ENCODE measurements at regions of chr2 and their contacts with region 1.

Region 1: DNA sequence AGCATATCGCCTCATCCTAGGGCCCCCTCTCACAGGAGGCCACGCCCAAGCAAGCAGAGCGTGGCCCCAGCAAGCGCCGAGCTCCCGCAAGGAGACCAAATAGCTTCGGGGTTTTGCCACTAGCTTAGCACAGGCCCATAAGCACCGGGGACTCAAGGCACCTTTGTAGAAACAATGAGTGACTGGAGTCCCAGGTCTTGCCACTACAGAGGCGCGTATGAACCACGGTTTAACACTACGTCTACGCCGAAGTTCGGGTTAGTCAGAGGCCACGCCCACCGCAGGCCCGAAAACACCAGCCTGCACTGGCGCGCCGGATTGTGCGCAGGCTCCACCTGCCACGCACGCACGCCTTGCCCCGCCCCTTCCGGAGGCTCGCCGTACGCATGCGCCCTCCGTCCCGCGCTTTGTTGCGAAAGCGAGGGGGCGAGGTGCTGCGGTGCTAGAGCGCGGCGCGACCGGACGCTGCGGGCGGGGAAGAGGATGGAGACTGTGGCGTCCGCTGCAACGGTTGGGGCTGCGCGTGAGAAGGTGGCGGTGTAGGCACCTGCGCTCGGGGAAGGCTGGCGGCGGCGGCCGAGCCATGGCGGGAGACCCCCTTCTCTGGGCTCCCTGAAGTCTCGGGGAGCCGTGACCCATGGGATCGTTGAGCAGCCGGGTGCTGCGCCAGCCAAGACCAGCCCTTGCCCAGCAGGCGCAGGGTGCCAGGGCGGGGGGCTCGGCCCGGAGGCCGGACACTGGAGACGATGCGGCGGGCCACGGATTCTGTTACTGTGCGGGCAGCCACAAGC is at the start of gene GMCL1:
- DNase-seq: peak; percentile 99
- H3K4me3 Mint-ChIP-seq: peak within 1 kb of the TSS; percentile 94
- H3K27ac Mint-ChIP-seq: peak within 1 kb of the TSS; percentile 88
- H3K4me1 Mint-ChIP-seq: peaks cover 51% of the 10 kb centered on the region
- H3K27me3 Mint-ChIP-seq: no peaks in the 10 kb centered on the region
- total RNA-seq, gene GMCL1: 15.9 to 19.4 TPM

Region 2: DNA sequence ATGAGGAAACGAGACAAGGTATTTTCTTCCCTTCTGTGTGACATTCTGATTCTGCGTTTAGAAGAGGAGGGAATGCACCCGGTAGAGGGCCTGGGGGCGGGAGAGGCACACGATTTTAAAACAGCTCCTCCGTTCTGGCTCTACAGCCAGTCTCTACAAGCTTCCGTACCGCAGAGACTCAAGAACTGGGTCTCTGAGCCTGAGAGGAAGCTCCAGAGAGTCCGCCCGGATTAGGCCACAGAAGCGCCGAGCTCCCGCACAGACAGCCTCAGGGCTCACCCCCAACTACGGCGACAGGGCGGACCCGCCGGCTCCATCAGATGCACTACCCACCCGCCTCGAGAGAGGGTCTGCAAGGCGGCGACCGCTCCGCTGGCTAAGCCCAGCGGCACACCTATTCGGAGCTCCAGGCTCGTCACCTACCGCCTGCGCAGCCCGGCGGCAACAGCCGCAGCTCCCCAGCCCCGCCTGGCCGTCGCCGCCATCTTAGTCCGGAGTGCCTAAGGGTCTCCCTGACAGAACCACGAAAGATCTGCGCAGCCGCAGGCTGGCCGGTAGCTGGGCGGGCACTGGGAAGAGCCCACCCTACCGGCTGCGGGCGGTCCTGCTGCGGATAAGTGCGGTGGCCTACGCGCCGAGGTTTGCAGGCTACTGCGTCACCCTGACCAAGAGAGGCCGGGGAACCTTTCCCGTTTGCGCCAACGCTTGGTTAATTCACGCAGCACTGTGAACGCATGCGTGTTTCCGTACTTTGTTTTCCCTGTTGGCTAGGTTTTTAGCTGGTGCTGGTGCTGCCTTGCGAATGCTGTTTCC is 392.3 kb before region 1 on chr2 and contains the start of gene NFU1:
- CTCF ChIA-PET with region 1: no interaction called
- intact Hi-C with region 1: loop called (anchors 2 kb)
- DNase-seq: peak; percentile 90
- H3K4me3 Mint-ChIP-seq: peak within 1 kb of the TSS; percentile 95
- H3K27ac Mint-ChIP-seq: peak within 1 kb of the TSS; percentile 94
- H3K4me1 Mint-ChIP-seq: peaks cover 29% of the 10 kb centered on the region
- H3K27me3 Mint-ChIP-seq: no peaks in the 10 kb centered on the region
- total RNA-seq, gene NFU1: 35.7 to 39.3 TPM

Region 3: GRCh38 chr2:69601179-69601612 is 228.3 kb before region 1 on chr2:
- CTCF ChIA-PET with region 1: no interaction called
- intact Hi-C with region 1: no loop called
- DNase-seq: peak; percentile 24
- H3K4me3 Mint-ChIP-seq: no peak overlapping the region
- H3K27ac Mint-ChIP-seq: peak overlapping the region; percentile 79
- H3K4me1 Mint-ChIP-seq: peaks cover 92% of the 10 kb centered on the region
- H3K27me3 Mint-ChIP-seq: no peaks in the 10 kb centered on the region

Region 4: DNA sequence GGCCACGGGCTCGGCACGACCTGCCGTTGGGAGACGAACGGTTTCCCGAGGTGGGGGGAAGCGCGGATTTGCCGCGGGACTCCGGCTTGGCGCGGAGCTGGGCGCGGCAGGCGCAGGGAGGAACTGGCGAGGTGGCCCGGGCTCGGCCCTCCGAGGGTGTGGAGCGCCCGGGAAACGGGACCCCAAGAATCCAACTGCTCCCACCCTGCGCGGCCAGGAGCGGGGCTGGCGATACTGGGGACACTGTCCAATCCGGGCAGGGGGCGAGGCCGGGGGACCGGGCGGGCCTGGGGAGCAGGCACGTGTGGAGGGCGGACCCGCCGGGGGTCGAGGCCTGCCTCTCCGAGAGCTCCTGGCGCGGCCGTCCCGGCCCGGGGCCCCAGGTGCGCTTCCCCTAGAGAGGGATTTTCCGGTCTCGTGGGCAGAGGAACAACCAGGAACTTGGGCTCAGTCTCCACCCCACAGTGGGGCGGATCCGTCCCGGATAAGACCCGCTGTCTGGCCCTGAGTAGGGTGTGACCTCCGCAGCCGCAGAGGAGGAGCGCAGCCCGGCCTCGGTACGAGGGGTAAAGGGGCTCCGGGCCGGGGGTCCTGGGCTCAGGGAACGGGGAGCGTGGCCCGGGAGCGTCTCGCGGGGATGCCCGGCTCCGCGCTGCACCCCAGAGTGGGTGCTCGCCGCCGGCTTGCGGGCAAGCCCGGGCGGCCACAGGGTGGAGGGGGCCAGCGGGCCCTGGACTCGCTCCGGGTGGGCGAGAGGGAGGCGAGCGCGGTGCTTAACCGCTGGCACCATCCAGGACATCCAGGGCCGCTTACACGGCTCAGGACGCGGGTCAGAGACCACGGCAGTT is 87.6 kb before region 1 on chr2 and contains the start of gene ANXA4:
- CTCF ChIA-PET with region 1: interaction called, 3 read pairs
- intact Hi-C with region 1: loop called (anchors 1 kb)
- DNase-seq: peak; percentile 78
- H3K4me3 Mint-ChIP-seq: peak within 1 kb of the TSS; percentile 75
- H3K27ac Mint-ChIP-seq: peak within 1 kb of the TSS; percentile 78
- H3K4me1 Mint-ChIP-seq: peaks cover 12% of the 10 kb centered on the region
- H3K27me3 Mint-ChIP-seq: no peaks in the 10 kb centered on the region
- total RNA-seq, gene ANXA4: 21.4 to 23.9 TPM

Region 5: DNA sequence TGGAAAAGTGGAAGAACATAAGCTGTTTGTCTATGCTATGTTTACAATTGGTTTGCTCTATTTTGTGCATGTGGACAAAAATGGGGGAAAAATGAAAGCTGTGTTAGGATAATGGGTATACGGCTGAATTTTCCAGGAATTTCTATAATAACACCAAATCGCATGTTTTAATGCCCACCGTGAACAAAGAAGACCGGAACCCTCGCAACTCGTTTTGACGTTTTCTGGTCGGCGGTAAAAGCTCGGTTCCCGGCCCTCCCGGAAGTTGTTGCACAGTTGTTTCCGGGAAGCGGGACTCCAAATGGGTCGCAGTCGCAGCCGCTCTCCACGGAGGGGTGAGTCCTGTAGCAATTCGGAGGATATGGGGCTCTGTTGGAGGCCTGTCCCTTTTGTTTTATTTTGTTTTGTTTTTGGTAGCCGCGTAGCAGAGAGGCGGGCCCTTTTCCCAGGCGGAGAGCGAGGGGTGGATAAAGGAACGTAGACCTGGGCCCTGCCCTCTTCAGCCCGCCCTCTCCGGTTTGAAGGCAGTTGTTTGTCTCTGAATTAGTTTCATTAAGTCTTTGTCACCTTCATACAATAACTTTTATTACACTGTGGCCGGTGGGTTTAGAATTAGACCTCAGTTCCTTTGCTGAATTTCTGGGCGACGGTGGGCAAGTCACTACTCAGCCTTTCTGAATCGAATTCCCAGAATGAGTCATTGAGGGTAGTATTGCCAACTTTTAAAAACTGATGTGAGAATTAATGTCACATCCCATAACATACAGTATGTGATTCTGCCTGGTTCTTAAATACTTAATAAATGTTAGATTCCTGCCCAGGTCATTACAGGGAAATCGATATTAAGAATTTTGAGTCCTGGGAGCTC is 64.5 kb after region 1 on chr2 and contains the start of gene SNRNP27:
- CTCF ChIA-PET with region 1: no interaction called
- intact Hi-C with region 1: loop called (anchors 1 kb)
- DNase-seq: peak; percentile 91
- H3K4me3 Mint-ChIP-seq: peak within 1 kb of the TSS; percentile 98
- H3K27ac Mint-ChIP-seq: peak within 1 kb of the TSS; percentile 97
- H3K4me1 Mint-ChIP-seq: peaks cover 41% of the 10 kb centered on the region
- H3K27me3 Mint-ChIP-seq: no peaks in the 10 kb centered on the region
- total RNA-seq, gene SNRNP27: 56.7 to 64.6 TPM

Region 6: GRCh38 chr2:70086838-70087701 is 257.6 kb after region 1 on chr2 and contains the start of gene PCBP1:
- CTCF ChIA-PET with region 1: no interaction called
- intact Hi-C with region 1: loop called (anchors 1 kb)
- DNase-seq: peak; percentile 96
- H3K4me3 Mint-ChIP-seq: peak within 1 kb of the TSS; percentile 97
- H3K27ac Mint-ChIP-seq: peak within 1 kb of the TSS; percentile 100
- H3K4me1 Mint-ChIP-seq: peaks cover 50% of the 10 kb centered on the region
- H3K27me3 Mint-ChIP-seq: no peaks in the 10 kb centered on the region
- total RNA-seq, gene PCBP1: 363 to 374 TPM

Region 7: DNA sequence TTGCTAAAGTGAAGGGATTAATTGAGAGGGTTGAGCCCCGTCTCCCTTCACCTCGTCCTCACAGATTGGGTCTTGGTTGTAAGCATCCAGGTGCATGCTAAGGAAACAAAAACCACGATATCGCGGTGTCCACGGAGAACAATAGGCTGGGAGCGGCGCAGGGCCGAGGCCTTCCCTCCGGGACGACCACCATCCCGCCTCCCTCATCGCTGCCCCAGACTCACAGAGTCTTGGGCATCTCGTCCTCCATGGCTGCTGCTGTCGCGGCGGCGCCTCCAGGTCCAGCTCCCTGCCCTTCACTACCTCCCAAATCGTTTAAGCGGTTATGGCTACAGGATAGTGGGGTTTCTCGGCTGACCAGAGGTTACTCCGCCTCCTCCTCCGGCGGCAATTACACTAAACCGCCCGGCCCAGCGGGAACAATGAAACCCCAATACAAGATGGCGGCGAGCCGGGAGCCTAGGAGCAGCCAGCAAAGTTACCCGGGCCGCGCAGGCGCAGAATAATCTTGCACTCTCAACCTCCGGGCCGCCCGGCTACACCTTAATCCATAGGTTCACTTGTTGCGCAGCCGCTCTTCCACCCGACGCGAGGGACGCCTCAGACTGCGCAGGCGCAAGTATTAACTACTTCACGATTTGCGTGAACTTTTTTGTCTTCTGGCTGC is 418.9 kb after region 1 on chr2 and contains the start of gene TIA1:
- CTCF ChIA-PET with region 1: no interaction called
- intact Hi-C with region 1: loop called (anchors 2 kb)
- DNase-seq: peak; percentile 99
- H3K4me3 Mint-ChIP-seq: peak within 1 kb of the TSS; percentile 99
- H3K27ac Mint-ChIP-seq: peak within 1 kb of the TSS; percentile 98
- H3K4me1 Mint-ChIP-seq: peaks cover 32% of the 10 kb centered on the region
- H3K27me3 Mint-ChIP-seq: no peaks in the 10 kb centered on the region
- total RNA-seq, gene TIA1: 83.2 to 83.9 TPM

Measured in activated naive CD4-positive, alpha-beta T cell treated with anti-CD3 and anti-CD28 coated beads for 36 hours (primary cell).